ENCODE measurements at regions of chr11 and their contacts with region 1.

Region 1: DNA sequence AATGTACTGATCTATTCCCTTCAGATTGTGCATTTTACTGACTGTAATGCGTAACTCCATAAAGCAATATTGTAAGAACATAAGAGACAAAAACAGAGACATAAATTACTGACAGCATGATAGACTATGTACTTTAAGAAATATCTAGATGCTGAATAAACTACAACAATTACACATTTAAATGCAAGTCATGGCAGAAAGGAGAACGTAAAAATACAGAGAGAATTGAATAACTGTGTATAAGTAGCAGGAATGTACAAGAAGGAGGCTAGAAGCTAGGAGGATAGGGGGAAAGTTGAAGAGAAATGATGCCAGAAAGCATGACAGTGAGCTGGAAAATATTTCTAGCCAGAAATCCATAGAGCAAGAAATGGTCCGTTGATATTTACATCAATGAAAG is 74.0 kb upstream of the FAM181B start:
- DNase-seq: no peak
- H3K4me3 ChIP-seq: no peak overlapping the region
- CTCF ChIP-seq: no peak

Region 2: DNA sequence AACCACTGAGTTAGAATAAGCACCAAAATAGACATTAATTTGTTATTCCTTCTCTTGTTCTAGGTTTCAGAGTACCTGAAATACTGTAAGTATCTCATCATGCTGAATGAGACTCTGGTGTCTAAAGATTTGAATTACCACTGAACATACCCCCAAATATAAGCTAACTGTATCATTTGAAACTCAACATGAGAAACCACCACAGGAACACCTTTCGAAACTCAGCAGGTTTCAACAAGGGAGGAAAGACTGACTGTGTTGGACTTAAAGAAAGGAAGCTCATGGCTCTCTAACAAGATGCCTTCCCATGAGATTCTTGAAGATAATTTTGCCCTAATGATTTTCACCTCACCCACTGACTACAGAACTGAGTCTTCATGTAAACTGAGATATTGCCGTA is 55.6 kb after region 1 on chr11:
- in situ Hi-C with region 1: no loop called
- DNase-seq: no peak
- H3K4me3 ChIP-seq: no peak overlapping the region
- CTCF ChIP-seq: no peak

Region 3: DNA sequence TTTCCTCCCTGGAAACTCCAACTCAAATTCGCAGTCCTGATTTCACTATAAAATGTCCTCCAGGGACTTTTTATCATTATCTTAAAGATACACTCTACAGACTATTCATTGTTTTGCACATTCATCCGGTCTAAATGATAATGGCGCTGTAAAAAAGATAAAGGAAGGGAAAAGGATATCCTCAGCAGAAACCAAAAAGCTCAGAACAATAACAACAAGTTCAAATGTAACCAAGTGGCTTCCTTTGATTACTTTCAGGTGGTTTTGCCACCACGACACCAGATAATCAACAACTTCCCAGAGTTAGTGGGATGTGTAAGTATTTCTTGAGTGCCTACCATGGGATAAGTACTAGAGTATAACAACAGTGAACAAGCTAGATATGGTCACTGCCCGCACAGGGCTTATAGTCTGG is 66.3 kb after region 1 on chr11:
- in situ Hi-C with region 1: no loop called
- DNase-seq: no peak
- H3K4me3 ChIP-seq: no peak overlapping the region
- CTCF ChIP-seq: no peak

Region 4: GRCh38 chr11:82889133-82890001 is 81.7 kb after region 1 on chr11:
- in situ Hi-C with region 1: loop called (anchors 5 kb)
- DNase-seq: no peak
- H3K4me3 ChIP-seq: no peak overlapping the region
- CTCF ChIP-seq: no peak

Measured in astrocyte of the cerebellum (primary cell).